Transverse colon (tissue), 4 donors: ENCODE measurements at regions of chr15 and their contacts with region 1.

Region 1: GRCh38 chr15:62847900-62848489 is 194.6 kb upstream of the TPM1 start:
- DNase-seq: peak; percentile 83
- H3K4me3 ChIP-seq: no peak overlapping the region
- H3K27ac ChIP-seq: peak overlapping the region; percentile 2 to 44 (median 13)
- H3K4me1 ChIP-seq: peaks cover 6 to 17% (median 7%) of the 10 kb centered on the region in 4 donors
- H3K27me3 ChIP-seq: no peaks in the 10 kb centered on the region
- CTCF ChIP-seq: peak; percentile 53 to 73 (median 66)
- EP300 ChIP-seq: no peak
- POLR2A ChIP-seq: no peak

Region 2: GRCh38 chr15:61175024-61175423 is 1673.0 kb before region 1 on chr15:
- in situ Hi-C with region 1: no loop called
- intact Hi-C with region 1: no loop called
- DNase-seq: no peak
- H3K4me3 ChIP-seq: no peak overlapping the region
- H3K27ac ChIP-seq: no peak overlapping the region
- H3K4me1 ChIP-seq: peaks cover 0 to 1% (median 0%) of the 10 kb centered on the region in 4 donors
- H3K27me3 ChIP-seq: no peaks in the 10 kb centered on the region
- CTCF ChIP-seq: no peak
- EP300 ChIP-seq: no peak
- POLR2A ChIP-seq: no peak

Region 3: DNA sequence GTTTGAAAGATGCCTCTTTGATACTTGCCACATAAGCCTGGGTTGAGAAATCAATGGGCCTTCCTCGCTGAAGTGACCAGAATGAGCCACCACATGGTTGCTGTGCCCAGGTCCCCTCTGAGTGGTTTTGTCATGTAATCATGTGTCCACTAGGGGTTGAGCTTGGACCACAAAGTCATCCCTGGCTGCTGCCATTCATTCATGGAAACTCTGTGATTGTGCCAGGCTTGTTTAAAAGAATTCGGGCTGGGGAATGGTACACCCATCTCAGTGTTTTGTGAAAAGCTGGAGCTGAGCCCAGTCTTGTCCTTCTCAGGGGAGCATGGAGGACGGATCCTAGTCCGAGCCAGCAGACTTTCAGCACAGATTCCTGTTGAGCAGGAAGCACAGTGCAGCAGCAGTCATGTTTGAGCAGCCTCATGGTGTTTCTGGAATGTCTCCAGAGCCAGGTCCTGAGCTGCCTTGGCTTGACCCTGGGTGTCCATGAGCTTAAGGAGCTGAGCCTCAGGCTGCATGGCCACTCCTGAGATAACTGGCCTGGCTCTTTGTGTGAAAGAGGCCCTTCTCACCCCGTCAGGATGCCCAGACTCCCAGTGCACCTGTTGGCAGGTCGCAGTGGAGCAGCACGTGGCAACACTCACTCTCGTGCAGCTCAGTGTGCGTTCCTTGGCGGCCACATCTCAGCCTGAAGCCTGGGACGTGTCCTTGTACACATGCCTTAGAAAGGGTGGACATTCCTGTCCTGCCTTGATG is 65.8 kb before region 1 on chr15:
- in situ Hi-C with region 1: no loop called
- intact Hi-C with region 1: loop called (anchors 10 kb)
- DNase-seq: peak; percentile 54
- H3K4me3 ChIP-seq: no peak overlapping the region
- H3K27ac ChIP-seq: peak overlapping the region in 3 of 4 donors; percentile 34 to 69 (median 37)
- H3K4me1 ChIP-seq: peaks cover 0 to 8% (median 5%) of the 10 kb centered on the region in 4 donors
- H3K27me3 ChIP-seq: no peaks in the 10 kb centered on the region
- CTCF ChIP-seq: peak; percentile 61 to 85 (median 66)
- EP300 ChIP-seq: no peak
- POLR2A ChIP-seq: no peak

Region 4: GRCh38 chr15:63041974-63042819 is 194.2 kb after region 1 on chr15 and contains the start of gene TPM1:
- in situ Hi-C with region 1: no loop called
- intact Hi-C with region 1: loop called (anchors 1 kb)
- DNase-seq: peak; percentile 82
- H3K4me3 ChIP-seq: peak within 1 kb of the TSS; percentile 80 to 88 (median 84)
- H3K27ac ChIP-seq: peak within 1 kb of the TSS; percentile 96 to 98 (median 96)
- H3K4me1 ChIP-seq: peaks cover 0 to 45% (median 24%) of the 10 kb centered on the region in 4 donors
- H3K27me3 ChIP-seq: peaks cover 26% of the 10 kb centered on the region
- CTCF ChIP-seq: no peak
- EP300 ChIP-seq: no peak
- POLR2A ChIP-seq: peak; percentile 90
- total RNA-seq, gene TPM1: 775 to 2,480 (median 1,140) TPM